CD8-positive, alpha-beta memory T cell (primary cell): ENCODE measurements at regions of chr19 and their contacts with region 1.

Region 1: DNA sequence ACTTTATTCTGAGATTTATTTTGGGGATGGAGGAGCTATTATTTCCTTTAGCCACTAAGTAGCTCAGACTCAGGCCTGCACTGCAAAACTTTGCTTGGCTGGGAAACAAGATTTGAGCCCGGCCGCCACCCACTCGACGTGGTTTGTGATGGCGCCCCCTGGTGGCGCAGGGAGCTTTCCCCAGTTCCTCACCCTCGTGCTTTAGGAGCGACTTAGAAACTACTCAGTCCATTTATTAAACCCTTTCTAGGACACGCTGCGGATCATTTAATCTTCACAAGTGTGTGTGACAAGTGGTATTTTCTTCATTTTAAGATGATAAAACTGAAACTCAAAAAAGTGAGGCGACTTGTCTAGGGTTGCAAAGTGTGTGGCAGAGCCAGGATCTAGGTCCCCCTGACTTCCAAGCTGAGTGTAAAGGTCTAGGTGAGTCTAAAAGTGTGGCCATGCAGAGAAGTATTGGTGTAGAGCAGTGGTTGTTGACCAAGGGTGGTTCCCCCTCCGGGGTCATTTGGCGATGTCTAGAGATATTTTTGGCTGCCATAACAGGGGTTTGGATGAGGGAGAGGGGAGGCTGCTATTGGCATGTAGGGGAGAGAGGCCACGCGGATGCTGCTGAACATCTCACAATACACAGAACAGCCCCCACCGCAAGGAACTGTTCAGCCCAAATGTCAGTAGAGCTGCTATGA is 2.2 kb downstream of the CXCL17 start:
- DNase-seq: peak; percentile 65 to 84 (median 74)
- H3K4me3 ChIP-seq: no peak overlapping the region
- H3K4me3 Mint-ChIP-seq: peak overlapping the region in 5 of 7 donors; percentile 11 to 69 (median 39)
- H3K27ac ChIP-seq: no peak overlapping the region
- H3K27ac Mint-ChIP-seq: peak overlapping the region; percentile 19 to 79 (median 62)
- H3K4me1 ChIP-seq: peaks cover 19% of the 10 kb centered on the region
- H3K4me1 Mint-ChIP-seq: peaks cover 20 to 31% (median 21%) of the 10 kb centered on the region in 3 donors
- H3K27me3 ChIP-seq: no peaks in the 10 kb centered on the region
- H3K27me3 Mint-ChIP-seq: no peaks in the 10 kb centered on the region

Region 2: GRCh38 chr19:42343344-42344110 is 97.0 kb before region 1 on chr19:
- CTCF ChIA-PET with region 1: no interaction called
- POLR2A ChIA-PET with region 1: no interaction called
- DNase-seq: no peak
- H3K4me3 ChIP-seq: no peak overlapping the region
- H3K4me3 Mint-ChIP-seq: no peak overlapping the region
- H3K27ac ChIP-seq: no peak overlapping the region
- H3K27ac Mint-ChIP-seq: peak overlapping the region in 1 of 8 donors; percentile 83
- H3K4me1 ChIP-seq: no peaks in the 10 kb centered on the region
- H3K4me1 Mint-ChIP-seq: no peaks in the 10 kb centered on the region
- H3K27me3 ChIP-seq: no peaks in the 10 kb centered on the region
- H3K27me3 Mint-ChIP-seq: no peaks in the 10 kb centered on the region

Region 3: GRCh38 chr19:42423462-42424344 is 16.8 kb before region 1 on chr19:
- CTCF ChIA-PET with region 1: interaction called, 27 read pairs
- POLR2A ChIA-PET with region 1: interaction called, 4 read pairs
- DNase-seq: peak; percentile 86 to 94 (median 89)
- H3K4me3 ChIP-seq: peak overlapping the region; percentile 82
- H3K4me3 Mint-ChIP-seq: peak overlapping the region; percentile 88 to 99 (median 97)
- H3K27ac ChIP-seq: peak overlapping the region; percentile 44
- H3K27ac Mint-ChIP-seq: peak overlapping the region; percentile 55 to 96 (median 95)
- H3K4me1 ChIP-seq: peaks cover 33% of the 10 kb centered on the region
- H3K4me1 Mint-ChIP-seq: peaks cover 30 to 47% (median 33%) of the 10 kb centered on the region in 3 donors
- H3K27me3 ChIP-seq: no peaks in the 10 kb centered on the region
- H3K27me3 Mint-ChIP-seq: peaks cover 0 to 1% of the 10 kb centered on the region in 2 donors